WTC11 (cell line): ENCODE measurements at regions of chr5 and their contacts with region 1.

Region 1: DNA sequence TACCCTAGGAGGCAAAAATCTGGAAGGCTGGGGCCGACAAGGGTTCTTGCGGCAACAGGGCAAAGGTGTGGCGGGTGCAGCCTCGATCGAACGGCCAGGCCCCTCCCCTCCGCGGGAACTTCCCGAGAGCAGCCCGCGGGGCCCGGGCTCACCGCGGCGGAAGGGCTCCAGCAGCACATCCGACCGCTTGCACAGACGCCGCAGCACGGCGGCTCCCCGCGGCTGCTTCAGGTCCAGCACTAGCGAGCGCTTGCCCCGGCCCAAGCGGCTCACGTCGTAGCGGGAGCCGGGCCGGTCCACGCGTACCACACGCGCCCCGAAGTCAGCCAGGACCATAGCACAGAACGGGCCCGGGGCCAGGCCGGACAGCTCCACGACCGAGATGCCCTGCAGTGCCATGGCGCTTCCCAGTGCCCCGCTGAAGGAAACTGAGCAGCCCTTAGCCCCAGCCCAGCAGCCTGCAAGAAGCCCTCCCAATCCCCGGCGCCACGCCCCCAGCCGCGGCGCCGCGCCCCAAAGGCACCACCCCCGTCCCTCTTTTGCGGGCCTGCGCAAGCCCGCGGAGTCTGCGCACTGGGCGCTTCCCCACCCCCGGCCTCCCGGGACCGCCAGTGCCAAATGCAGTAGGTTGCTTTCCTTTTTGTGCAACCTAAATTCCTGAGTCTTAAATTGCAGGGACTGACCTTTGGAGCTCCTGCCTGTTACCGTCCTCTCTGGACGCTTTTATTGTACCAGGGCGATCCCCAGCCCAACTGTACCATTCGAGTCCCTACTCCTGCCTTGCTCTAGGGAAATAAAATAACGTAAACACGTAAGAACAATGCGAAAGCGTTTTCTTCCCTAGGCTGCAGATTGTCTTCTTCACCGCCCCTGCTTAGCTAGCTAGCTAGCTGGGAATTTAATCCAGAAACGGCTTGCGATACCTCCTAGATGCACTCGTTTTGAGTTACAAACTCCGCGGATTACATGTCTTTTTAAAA is at the start of gene AMACR:
- DNase-seq: peak; percentile 93
- ATAC-seq: peak; percentile 94
- H3K4me3 Mint-ChIP-seq: peak within 1 kb of the TSS; percentile 83
- H3K27ac Mint-ChIP-seq: peak within 1 kb of the TSS; percentile 97
- H3K4me1 Mint-ChIP-seq: peaks cover 18% of the 10 kb centered on the region
- H3K27me3 Mint-ChIP-seq: no peaks in the 10 kb centered on the region
- CTCF ChIP-seq: no peak
- total RNA-seq, gene AMACR: 11.2 to 12.0 TPM (median 11.9 TPM) in 3 replicates

Region 2: GRCh38 chr5:33997331-33997983 is 10.5 kb before region 1 on chr5:
- CTCF ChIA-PET with region 1: interaction called, 10 read pairs
- POLR2A ChIA-PET with region 1: no interaction called
- DNase-seq: no peak
- ATAC-seq: peak; percentile 81
- H3K4me3 Mint-ChIP-seq: no peak overlapping the region
- H3K27ac Mint-ChIP-seq: peak overlapping the region; percentile 73; the same call in 1 of the 2 replicates
- H3K4me1 Mint-ChIP-seq: peaks cover 31% of the 10 kb centered on the region
- H3K27me3 Mint-ChIP-seq: no peaks in the 10 kb centered on the region
- CTCF ChIP-seq: peak; percentile 24; the same call in 1 of the 2 replicates